ENCODE measurements at regions of chr11 and their contacts with region 1.

Region 1: GRCh38 chr11:67507864-67508485 is at the start of gene CDK2AP2:
- DNase-seq: peak; percentile 99
- H3K4me3 Mint-ChIP-seq: peak within 1 kb of the TSS; percentile 95
- H3K27ac Mint-ChIP-seq: peak within 1 kb of the TSS; percentile 97
- H3K4me1 Mint-ChIP-seq: peaks cover 35% of the 10 kb centered on the region
- H3K27me3 Mint-ChIP-seq: peaks cover 10% of the 10 kb centered on the region
- total RNA-seq, gene CDK2AP2: 93.5 and 97.9 TPM in 2 replicates

Region 2: DNA sequence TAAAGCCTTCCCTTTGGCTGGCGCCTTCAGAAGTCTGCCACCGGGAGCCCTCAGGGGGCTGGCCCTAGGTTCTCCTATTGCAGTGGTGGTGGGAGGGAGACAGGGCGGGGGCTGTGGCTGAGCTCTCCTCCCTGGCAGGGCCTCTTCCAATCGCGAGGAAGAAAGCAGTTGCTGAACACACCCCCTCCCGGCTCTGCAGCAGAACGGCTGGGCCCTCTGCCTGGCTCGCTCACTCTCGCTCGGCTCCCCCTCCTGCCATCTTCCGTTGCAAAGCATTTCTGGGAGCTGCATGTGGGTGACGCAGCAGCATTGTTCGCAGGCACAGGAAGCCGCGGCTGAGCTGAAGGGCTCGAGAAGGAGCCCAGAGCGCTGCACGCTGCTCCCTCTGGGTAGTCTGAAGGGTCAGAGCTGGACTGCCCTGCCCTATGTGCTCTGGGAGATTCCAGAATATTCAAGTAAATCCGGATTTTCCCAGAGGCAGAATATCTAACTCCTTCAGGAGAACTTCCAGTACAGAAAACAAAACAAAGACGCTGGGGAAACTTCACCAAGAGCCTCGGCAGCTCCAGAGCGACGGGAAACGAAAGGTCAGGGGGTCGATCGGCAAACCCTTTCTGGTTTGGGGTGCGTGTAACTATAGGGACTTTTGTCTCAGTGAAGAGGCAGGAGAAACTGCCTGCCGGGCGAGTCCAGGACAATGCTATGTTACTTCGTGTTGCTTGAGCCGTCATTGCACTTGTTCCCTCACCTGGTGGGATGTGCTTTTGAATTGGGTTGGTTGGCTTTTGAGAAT is 268.0 kb before region 1 on chr11:
- intact Hi-C with region 1: loop called (anchors 1 kb)
- DNase-seq: peak; percentile 98
- H3K4me3 Mint-ChIP-seq: peak overlapping the region; percentile 100
- H3K27ac Mint-ChIP-seq: peak overlapping the region; percentile 98
- H3K4me1 Mint-ChIP-seq: peaks cover 43% of the 10 kb centered on the region
- H3K27me3 Mint-ChIP-seq: no peaks in the 10 kb centered on the region

Region 3: GRCh38 chr11:67391304-67392132 is 116.5 kb before region 1 on chr11 and contains the start of gene RAD9A:
- intact Hi-C with region 1: loop called (anchors 1 kb)
- DNase-seq: peak; percentile 97
- H3K4me3 Mint-ChIP-seq: peak within 1 kb of the TSS; percentile 90
- H3K27ac Mint-ChIP-seq: peak within 1 kb of the TSS; percentile 80
- H3K4me1 Mint-ChIP-seq: peaks cover 31% of the 10 kb centered on the region
- H3K27me3 Mint-ChIP-seq: no peaks in the 10 kb centered on the region
- total RNA-seq, gene RAD9A: 31.6 and 34.3 TPM in 2 replicates

Region 4: DNA sequence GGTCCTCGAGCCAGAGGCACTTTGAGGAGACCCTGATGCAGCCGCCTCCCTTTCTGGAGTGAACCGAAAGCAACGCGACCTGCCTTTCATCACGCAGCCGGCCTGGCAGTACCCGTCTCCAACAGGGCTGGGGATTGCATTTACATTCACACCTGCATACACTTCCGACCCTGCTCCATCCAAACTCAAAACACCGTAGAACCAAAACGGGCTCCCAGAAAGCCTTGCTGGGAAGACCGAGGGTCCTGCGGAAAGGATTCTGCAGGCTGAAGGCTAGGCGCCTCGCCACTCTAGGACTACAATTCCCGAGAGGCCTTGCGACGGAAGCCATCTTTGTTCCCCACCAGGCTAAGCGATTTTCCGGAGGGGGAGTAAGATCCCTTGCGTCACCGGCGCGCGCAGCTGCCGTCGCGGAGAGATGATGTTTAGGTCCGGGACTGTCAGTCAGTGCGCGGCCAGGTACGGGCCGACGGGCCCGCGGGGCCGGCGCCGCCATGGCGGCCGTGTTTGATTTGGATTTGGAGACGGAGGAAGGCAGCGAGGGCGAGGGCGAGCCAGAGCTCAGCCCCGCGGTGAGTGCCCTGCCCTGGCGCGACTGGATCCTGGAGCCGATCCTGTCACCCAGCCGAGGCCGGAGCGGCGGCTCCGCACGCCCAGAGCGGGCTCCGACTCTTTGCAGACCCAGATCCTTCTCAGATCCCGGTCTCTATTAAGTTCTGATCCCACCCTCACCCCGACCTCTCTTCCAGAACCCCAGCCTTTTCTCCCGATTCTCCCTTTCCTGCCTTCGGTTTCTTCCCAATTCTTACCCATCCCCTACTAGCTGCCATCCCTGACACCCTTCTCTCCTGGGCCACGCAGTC is 79.7 kb before region 1 on chr11 and contains the start of gene RPS6KB2:
- intact Hi-C with region 1: loop called (anchors 1 kb)
- DNase-seq: peak; percentile 100
- H3K4me3 Mint-ChIP-seq: peak within 1 kb of the TSS; percentile 98
- H3K27ac Mint-ChIP-seq: peak within 1 kb of the TSS; percentile 97
- H3K4me1 Mint-ChIP-seq: peaks cover 25% of the 10 kb centered on the region
- H3K27me3 Mint-ChIP-seq: no peaks in the 10 kb centered on the region
- total RNA-seq, gene RPS6KB2: 79.3 and 83.1 TPM in 2 replicates

Region 5: DNA sequence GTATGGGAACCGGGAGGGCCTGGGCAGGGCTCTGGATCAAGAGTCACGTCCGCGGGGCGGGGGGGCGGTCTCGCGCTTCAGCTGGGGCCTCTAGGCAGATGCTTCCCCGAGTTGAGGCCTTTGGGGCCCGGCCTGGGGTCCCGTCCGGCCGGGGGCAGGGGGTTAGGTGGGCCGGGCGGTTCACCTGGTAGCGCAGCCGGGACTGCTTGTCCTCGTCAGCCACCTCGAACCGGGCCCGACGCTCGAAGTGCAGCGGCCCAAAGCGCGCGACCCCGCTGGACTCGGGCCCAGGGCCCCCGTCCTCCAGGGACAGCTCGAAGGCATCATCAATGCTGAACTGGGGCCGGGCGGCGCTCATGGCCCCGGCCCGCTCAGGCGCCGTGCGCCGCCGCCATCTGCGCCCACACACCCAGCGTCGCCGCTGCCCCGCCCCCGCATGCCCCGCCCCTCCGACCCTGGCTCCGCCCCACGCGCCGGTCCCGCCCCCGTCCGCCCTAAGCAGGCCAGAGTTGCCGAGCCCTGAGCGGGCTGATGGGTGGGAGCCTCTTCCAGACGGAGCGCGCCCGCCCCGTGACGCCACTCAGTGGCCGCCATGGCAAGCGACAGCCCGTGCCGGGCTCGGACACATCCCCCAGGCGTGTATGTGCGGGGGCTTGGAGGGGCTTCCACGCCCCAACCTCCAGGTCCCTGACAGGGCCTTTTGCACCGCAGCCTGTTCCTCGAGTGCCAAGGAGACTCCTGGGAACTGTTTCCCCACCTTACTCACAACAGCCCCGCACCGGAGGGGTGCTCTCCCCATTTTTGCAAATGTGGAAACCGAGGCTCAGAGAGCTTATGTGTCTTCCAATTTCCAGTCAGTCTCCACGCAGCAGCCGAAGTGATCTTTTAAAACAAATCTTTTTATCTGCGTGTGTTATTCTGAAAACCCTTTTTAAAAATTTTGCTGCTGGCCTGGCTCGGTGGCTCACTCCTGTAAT is 38.9 kb before region 1 on chr11 and contains the start of gene TMEM134:
- intact Hi-C with region 1: loop called (anchors 1 kb)
- DNase-seq: peak; percentile 96
- H3K4me3 Mint-ChIP-seq: peak within 1 kb of the TSS; percentile 96
- H3K27ac Mint-ChIP-seq: peak within 1 kb of the TSS; percentile 84
- H3K4me1 Mint-ChIP-seq: peaks cover 25% of the 10 kb centered on the region
- H3K27me3 Mint-ChIP-seq: no peaks in the 10 kb centered on the region
- total RNA-seq, gene TMEM134: 56.8 and 58.3 TPM in 2 replicates

Region 6: DNA sequence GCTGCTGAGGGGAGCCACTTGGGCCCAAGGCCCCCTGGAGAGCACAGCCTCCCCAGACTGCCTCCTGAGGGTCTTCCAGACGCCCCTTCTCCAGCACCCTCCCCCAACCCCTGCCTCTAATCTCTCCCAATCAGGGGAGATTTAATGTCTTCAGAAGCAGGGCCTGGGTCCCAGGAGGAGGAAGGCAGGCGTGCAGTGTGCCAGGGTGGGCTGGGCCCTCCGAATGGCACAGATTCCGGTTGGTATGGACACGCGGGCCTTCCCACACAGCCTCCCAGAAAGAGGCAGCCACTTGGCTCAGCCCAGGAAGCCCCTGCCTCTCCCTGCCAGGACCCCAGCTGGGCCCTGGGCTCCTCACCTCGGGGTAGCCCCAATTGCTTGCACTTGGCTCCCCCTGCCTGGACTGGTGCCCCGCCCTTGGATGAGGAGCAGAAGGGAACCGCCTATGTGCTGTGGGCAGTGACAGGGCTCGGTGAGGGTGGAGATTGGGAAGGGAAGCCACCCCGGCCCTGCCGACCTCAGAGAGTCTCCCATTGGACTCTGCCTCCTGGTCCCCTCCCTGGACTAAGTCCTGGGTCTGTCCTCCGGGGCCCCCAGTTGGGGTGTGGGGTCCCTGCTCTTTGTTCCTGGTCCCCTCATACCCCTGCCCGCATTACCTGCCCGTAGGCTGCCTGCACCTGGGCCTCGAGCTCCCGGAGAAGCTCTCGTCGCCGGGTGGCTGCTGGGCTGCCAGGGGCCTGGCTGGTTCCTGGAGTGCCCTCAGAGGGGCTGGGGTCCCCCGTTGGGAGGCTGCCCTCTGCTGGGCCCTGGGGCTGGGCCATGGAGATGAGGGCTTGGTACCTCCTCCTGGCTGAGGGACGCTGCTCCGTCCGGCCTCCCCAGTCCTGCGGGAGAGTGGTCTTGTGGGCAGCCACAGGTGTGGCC is 15.8 kb after region 1 on chr11:
- intact Hi-C with region 1: no loop called
- DNase-seq: no peak
- H3K4me3 Mint-ChIP-seq: no peak overlapping the region
- H3K27ac Mint-ChIP-seq: no peak overlapping the region
- H3K4me1 Mint-ChIP-seq: no peaks in the 10 kb centered on the region
- H3K27me3 Mint-ChIP-seq: peaks cover 6% of the 10 kb centered on the region

Region 7: DNA sequence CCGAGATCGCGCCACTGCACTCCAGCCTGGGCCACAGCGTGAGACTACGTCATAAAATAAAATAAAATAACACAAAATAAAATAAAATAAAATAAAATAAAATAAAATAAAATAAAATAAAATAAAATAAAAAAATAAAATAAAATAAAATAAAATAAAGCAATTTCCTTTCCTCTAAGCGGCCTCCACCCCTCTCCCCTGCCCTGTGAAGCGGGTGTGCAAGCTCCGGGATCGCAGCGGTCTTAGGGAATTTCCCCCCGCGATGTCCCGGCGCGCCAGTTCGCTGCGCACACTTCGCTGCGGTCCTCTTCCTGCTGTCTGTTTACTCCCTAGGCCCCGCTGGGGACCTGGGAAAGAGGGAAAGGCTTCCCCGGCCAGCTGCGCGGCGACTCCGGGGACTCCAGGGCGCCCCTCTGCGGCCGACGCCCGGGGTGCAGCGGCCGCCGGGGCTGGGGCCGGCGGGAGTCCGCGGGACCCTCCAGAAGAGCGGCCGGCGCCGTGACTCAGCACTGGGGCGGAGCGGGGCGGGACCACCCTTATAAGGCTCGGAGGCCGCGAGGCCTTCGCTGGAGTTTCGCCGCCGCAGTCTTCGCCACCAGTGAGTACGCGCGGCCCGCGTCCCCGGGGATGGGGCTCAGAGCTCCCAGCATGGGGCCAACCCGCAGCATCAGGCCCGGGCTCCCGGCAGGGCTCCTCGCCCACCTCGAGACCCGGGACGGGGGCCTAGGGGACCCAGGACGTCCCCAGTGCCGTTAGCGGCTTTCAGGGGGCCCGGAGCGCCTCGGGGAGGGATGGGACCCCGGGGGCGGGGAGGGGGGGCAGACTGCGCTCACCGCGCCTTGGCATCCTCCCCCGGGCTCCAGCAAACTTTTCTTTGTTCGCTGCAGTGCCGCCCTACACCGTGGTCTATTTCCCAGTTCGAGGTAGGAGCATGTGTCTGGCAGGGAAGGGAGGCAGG is 75.6 kb after region 1 on chr11 and contains the start of gene GSTP1:
- intact Hi-C with region 1: loop called (anchors 5 kb)
- DNase-seq: peak; percentile 94
- H3K4me3 Mint-ChIP-seq: peak within 1 kb of the TSS; percentile 95
- H3K27ac Mint-ChIP-seq: peak within 1 kb of the TSS; percentile 94
- H3K4me1 Mint-ChIP-seq: peaks cover 40% of the 10 kb centered on the region
- H3K27me3 Mint-ChIP-seq: peaks cover 19% of the 10 kb centered on the region
- total RNA-seq, gene GSTP1: 305 and 312 TPM in 2 replicates

Measured in activated CD4-positive, alpha-beta T cell treated with anti-CD3 and anti-CD28 coated beads, Interleukin-2, amount 10 ng/mL, durations not matched to agents 24 days and 14 days (primary cell).